WTC11 (cell line): ENCODE measurements at regions of chr2 and their contacts with region 1.

Region 1: GRCh38 chr2:46062637-46063412 is 234.4 kb upstream of the EPAS1 start:
- DNase-seq: peak; percentile 90
- ATAC-seq: peak; percentile 84
- H3K4me3 Mint-ChIP-seq: no peak overlapping the region
- H3K27ac Mint-ChIP-seq: peak overlapping the region; percentile 46; the same call in 1 of the 2 replicates
- H3K4me1 Mint-ChIP-seq: peaks cover 12% of the 10 kb centered on the region
- H3K27me3 Mint-ChIP-seq: no peaks in the 10 kb centered on the region
- CTCF ChIP-seq: peak; percentile 75

Region 2: GRCh38 chr2:45643543-45644542 is 419.0 kb before region 1 on chr2:
- CTCF ChIA-PET with region 1: no interaction called
- POLR2A ChIA-PET with region 1: no interaction called
- DNase-seq: peak; percentile 75
- ATAC-seq: peak; percentile 92
- H3K4me3 Mint-ChIP-seq: peak overlapping the region; percentile 65
- H3K27ac Mint-ChIP-seq: no peak overlapping the region
- H3K4me1 Mint-ChIP-seq: peaks cover 19% of the 10 kb centered on the region
- H3K27me3 Mint-ChIP-seq: peaks cover 54% of the 10 kb centered on the region
- CTCF ChIP-seq: peak; percentile 99

Region 3: DNA sequence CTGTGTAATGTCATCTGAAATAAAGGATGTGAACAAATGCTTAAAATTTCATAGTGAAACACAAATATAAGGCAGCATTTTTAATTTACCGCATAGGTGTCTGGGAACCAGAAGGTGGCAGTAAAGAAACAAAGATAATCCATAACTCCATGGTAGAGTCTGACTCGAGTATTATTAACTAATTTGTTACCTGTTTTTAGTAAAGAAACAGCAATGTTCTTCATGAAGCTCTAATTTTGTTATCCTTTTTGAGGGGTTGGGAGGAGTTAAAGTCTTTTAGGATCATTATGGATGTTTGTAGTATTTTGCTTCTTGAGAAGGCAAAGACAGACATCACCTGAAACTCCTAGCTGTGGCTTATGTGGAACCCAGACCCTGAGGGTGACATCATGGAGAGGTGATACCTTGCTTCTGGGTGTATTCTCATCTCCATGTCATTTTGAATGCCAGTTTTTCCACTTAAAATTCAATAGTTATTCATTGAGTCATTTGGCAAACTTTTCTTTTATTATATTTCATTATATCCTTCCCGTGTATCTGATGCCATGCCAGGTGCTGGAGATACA is 51.8 kb before region 1 on chr2:
- CTCF ChIA-PET with region 1: interaction called, 10 read pairs
- POLR2A ChIA-PET with region 1: no interaction called
- DNase-seq: no peak
- ATAC-seq: no peak
- H3K4me3 Mint-ChIP-seq: no peak overlapping the region
- H3K27ac Mint-ChIP-seq: no peak overlapping the region
- H3K4me1 Mint-ChIP-seq: peaks cover 41% of the 10 kb centered on the region
- H3K27me3 Mint-ChIP-seq: no peaks in the 10 kb centered on the region
- CTCF ChIP-seq: no peak

Region 4: GRCh38 chr2:46073540-46074018 is 10.8 kb after region 1 on chr2:
- CTCF ChIA-PET with region 1: interaction called, 10 read pairs
- POLR2A ChIA-PET with region 1: no interaction called
- DNase-seq: no peak
- ATAC-seq: peak; percentile 24; the same call in 1 of the 2 replicates
- H3K4me3 Mint-ChIP-seq: no peak overlapping the region
- H3K27ac Mint-ChIP-seq: no peak overlapping the region
- H3K4me1 Mint-ChIP-seq: peaks cover 17% of the 10 kb centered on the region
- H3K27me3 Mint-ChIP-seq: no peaks in the 10 kb centered on the region
- CTCF ChIP-seq: no peak

Region 5: DNA sequence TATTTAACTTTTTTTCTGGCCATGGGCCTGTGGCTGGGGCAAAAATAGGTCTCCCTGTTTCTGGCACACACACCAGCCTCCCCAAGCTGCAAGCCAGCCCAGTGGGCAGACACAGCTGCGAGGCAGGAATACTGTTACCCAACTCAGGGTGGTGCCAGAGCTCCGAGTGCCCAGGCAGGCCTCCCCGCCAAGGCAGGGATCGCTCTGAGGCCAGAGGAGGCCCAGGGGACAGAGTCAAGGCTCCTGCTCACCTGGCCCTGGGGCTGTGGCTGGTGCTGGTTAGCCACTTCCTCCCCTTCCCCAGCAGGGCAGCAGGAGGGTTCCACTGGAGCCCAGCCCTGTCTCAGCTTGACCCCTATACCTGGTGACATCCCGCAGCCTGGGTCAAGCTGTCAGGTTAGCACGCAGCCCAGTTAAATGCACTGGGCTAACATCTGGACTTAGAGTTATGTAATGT is 167.3 kb after region 1 on chr2:
- CTCF ChIA-PET with region 1: interaction called, 10 read pairs
- POLR2A ChIA-PET with region 1: no interaction called
- DNase-seq: peak; percentile 28
- ATAC-seq: peak; percentile 43
- H3K4me3 Mint-ChIP-seq: no peak overlapping the region; the same call in 1 of the 2 replicates
- H3K27ac Mint-ChIP-seq: peak overlapping the region; percentile 82
- H3K4me1 Mint-ChIP-seq: peaks cover 46% of the 10 kb centered on the region
- H3K27me3 Mint-ChIP-seq: no peaks in the 10 kb centered on the region
- CTCF ChIP-seq: no peak

Region 6: GRCh38 chr2:46364797-46365457 is 302.1 kb after region 1 on chr2:
- CTCF ChIA-PET with region 1: interaction called, 41 read pairs
- POLR2A ChIA-PET with region 1: no interaction called
- DNase-seq: peak; percentile 30
- ATAC-seq: peak; percentile 72
- H3K4me3 Mint-ChIP-seq: no peak overlapping the region
- H3K27ac Mint-ChIP-seq: no peak overlapping the region
- H3K4me1 Mint-ChIP-seq: no peaks in the 10 kb centered on the region
- H3K27me3 Mint-ChIP-seq: no peaks in the 10 kb centered on the region
- CTCF ChIP-seq: peak; percentile 66